OCI-LY7 (cell line): ENCODE measurements at regions of chr18 and their contacts with region 1.

Region 1: DNA sequence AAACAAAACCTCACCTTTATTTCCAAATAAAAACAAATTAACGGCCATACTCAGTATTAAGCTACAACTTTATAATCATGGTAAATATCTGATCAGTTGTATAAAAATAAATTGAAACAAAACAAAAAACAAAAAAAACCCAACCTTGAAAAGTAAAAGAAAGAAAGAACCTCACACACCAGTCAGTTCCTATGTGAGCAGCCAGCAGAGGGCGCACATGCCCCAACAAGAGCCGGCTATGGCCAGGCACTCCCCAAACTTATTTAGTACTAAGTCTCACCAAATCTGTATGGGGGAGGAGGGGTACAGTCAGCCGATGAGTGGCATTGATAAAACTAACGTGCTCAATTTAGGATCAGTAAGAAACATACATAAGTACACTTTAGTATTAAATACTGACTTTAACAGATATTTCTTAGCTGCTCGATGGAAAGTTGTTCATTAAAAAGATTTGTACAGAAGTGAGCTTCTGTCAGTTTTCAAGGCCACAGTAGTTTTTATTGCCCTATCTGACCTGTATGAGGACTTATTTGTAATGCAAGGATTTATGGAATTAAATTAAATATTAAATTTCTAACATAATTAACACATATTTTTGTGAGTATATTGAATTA is 172.6 kb downstream of the TCF4 start:
- DNase-seq: peak; percentile 80
- H3K4me3 ChIP-seq: no peak overlapping the region
- H3K27ac ChIP-seq: no peak overlapping the region
- H3K4me1 ChIP-seq: peaks cover 52% of the 10 kb centered on the region
- CTCF ChIP-seq: peak; percentile 89

Region 2: DNA sequence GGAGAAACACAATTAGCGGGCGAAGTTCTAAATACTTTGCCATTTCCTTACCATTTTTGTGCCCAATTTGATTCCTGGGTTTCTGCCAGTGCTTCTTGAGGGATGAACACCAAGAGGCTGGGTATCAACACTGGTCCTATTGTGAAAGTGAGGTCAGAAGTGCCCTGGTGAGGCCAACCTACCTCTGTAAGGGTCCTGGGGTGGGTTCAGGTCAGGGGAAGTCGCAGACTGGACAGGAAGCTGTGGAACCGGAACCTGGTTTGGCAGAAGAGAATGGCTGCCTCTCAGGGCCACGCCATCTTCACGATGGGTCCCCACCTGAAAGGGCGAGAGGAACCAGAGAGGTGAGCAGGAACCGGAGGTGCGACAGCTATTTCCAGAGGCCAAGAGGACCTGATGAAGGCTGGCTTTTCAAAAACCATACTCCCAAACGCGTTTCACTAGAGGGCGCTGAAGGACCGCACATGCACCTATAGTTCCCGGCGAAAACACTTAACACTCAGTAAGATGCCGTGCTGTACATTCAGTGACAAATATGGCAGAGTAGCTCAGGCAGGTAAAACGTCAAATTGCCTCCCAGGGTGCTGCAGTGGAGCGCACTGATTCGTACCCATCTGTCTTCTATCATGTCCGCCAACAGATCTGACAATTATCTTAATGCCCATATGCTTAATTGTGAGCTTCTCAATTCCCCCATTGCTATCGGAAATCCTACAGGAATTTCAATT is 180.8 kb before region 1 on chr18:
- CTCF ChIA-PET with region 1: no interaction called
- POLR2A ChIA-PET with region 1: no interaction called
- intact Hi-C with region 1: loop called (anchors 10 kb)
- DNase-seq: peak; percentile 61
- H3K4me3 ChIP-seq: no peak overlapping the region
- H3K27ac ChIP-seq: no peak overlapping the region
- H3K4me1 ChIP-seq: no peaks in the 10 kb centered on the region
- CTCF ChIP-seq: peak; percentile 77

Region 3: GRCh38 chr18:55322178-55322735 is 93.1 kb before region 1 on chr18:
- CTCF ChIA-PET with region 1: no interaction called
- POLR2A ChIA-PET with region 1: no interaction called
- intact Hi-C with region 1: loop called (anchors 5 kb)
- DNase-seq: peak; percentile 70
- H3K4me3 ChIP-seq: peak overlapping the region; percentile 73
- H3K27ac ChIP-seq: peak overlapping the region; percentile 61
- H3K4me1 ChIP-seq: peaks cover 58% of the 10 kb centered on the region
- CTCF ChIP-seq: peak; percentile 26; the same call in 1 of the 2 replicates

Region 4: DNA sequence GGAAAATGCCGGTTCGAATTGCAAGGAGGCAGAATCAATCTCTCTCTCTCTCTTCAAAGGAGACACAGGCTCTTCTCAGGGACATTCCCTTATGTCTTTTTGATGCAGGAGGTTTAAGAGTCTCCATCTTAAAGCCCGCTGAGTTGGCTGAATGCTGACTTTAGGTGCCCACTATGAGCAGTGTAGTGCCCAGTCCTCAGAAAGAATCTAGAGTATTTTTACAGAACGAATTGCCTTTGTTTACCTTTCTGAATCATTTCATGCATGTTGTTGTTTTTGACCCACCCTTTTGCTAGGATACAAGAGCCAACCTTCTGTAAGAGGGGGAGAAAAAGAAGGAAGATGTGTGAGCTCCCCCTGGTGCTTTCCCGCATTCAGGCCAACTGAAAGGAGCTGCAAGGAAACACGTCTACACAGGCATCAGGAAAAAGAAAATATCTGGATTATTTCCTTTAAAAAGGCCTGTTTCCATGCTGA is 366.2 kb after region 1 on chr18:
- CTCF ChIA-PET with region 1: no interaction called
- POLR2A ChIA-PET with region 1: no interaction called
- intact Hi-C with region 1: loop called (anchors 5 kb)
- DNase-seq: peak; percentile 20
- H3K4me3 ChIP-seq: no peak overlapping the region
- H3K27ac ChIP-seq: no peak overlapping the region
- H3K4me1 ChIP-seq: peaks cover 13% of the 10 kb centered on the region
- CTCF ChIP-seq: peak; percentile 64

Region 5: DNA sequence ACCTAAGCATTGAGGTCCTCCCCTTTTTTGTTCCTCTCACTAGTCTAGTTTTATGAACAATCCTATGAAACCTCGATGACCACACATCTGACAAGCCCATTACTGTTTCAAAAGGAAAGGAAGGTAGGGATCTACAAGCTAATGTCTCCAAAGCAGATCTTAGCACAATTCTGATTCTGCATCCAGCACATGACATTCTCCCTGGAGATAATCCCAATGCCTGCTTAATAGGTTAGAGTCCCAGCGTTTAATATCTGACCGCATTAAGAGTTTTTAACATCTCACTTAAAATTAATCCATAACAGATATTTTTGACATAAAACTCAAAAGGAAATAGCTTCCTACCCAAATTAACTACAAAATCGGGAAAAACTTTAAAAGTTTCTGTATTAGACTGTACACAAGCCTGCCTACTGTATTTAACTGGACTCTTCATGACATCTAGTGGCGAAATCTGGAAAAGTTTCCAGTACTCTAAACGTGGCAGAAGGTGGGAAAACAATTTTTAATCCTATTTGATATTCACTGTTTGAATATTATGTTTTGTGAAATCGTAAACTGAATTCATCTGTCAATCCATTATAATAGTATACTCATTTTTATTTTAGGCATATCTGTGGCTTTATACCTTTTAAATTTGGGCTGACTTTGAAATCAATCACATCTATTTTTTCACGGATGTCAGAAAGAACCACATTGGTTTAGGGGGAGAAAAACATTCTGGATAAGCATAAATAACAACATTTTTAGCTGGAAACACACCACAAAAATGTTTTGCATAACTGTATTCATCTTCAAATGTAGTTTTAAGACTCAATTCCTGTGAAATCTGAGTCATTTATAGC is 1160.7 kb after region 1 on chr18:
- CTCF ChIA-PET with region 1: no interaction called
- POLR2A ChIA-PET with region 1: no interaction called
- intact Hi-C with region 1: loop called (anchors 10 kb)
- DNase-seq: peak; percentile 33
- H3K4me3 ChIP-seq: no peak overlapping the region
- H3K27ac ChIP-seq: no peak overlapping the region
- H3K4me1 ChIP-seq: no peaks in the 10 kb centered on the region
- CTCF ChIP-seq: peak; percentile 74